GM12878 (cell line): ENCODE measurements at regions of chr18 and their contacts with region 1.

Region 1: DNA sequence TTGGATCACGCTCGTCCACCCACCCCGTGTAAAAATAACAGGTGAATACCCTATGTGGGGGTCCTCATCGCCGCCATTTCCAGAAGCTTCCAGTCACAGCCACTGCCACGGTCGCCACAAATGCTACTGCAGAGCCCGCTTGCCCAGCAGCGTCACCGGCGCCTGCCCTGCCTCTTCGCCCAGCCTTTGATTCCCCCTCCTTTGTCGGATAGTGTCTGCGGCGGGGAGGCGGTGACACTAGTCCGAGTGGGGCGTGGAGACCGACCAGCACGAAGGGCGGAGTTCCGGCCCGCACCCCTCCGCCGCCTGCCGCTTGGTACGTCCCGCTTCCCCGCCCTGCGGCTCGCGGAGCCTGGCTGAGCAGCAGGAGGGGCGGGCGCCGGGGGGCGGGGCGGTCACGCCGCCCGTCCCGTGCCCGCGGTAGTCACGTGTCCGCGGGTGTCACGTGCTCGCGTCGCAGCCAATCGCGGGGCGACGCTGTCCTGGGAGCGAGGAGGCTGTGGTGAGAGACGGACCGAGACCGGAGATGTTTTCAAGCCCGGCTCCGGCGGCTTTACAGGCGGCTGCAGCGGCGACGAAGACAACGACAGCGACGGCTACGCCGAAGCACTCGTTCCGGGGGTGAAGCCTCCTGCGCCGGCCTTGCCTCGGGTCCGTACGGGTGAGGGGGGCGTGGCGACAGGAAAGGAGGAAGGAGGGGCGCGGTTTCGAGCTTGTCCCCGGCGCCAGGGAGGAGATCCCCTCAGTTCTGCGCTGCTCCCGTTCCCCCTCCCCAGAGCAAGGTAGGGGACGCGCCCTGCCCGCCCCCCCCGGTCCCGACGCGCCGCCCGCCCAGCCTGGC is at the start of gene ANKRD12:
- DNase-seq: peak; percentile 89
- ATAC-seq: peak; percentile 86
- H3K4me3 ChIP-seq: peak within 1 kb of the TSS; percentile 92
- H3K27ac ChIP-seq: peak within 1 kb of the TSS; percentile 80
- H3K4me1 ChIP-seq: no peaks in the 10 kb centered on the region; the same call in 1 of the 2 replicates
- H3K27me3 ChIP-seq: no peaks in the 10 kb centered on the region
- CTCF ChIP-seq: no peak
- EP300 ChIP-seq: 0 out of 4 replicates have a peak, but pooled peaks of 1 of the 2 experiments have one; percentile 16
- POLR2A ChIP-seq: peak; percentile 90
- RAD21 ChIP-seq: no peak
- polyA plus RNA-seq, gene ANKRD12: 20.0 to 20.3 TPM

Region 2: GRCh38 chr18:9102508-9103375 is 33.8 kb before region 1 on chr18 and contains the start of gene NDUFV2:
- CTCF ChIA-PET with region 1: interaction called, 95 read pairs
- POLR2A ChIA-PET with region 1: interaction called, 85 read pairs
- RAD21 ChIA-PET with region 1: interaction called, 73 read pairs
- SMC1A ChIA-PET with region 1: interaction called, 137 read pairs
- in situ Hi-C with region 1: no loop called
- intact Hi-C with region 1: loop called (anchors 2 kb)
- DNase-seq: peak; percentile 77
- ATAC-seq: peak; percentile 93
- H3K4me3 ChIP-seq: peak within 1 kb of the TSS; percentile 87
- H3K27ac ChIP-seq: peak within 1 kb of the TSS; percentile 85
- H3K4me1 ChIP-seq: peaks cover 5% of the 10 kb centered on the region
- H3K27me3 ChIP-seq: no peaks in the 10 kb centered on the region
- CTCF ChIP-seq: no peak
- EP300 ChIP-seq: no peak
- POLR2A ChIP-seq: peak; percentile 87
- RAD21 ChIP-seq: no peak
- polyA plus RNA-seq, gene NDUFV2: 409 to 471 TPM

Region 3: GRCh38 chr18:9117980-9118841 is 18.3 kb before region 1 on chr18:
- CTCF ChIA-PET with region 1: interaction called, 13 read pairs
- POLR2A ChIA-PET with region 1: interaction called, 13 read pairs
- RAD21 ChIA-PET with region 1: interaction called, 40 read pairs
- SMC1A ChIA-PET with region 1: interaction called, 137 read pairs
- in situ Hi-C with region 1: no loop called
- intact Hi-C with region 1: loop called (anchors 1 kb)
- DNase-seq: no peak
- ATAC-seq: peak; percentile 48
- H3K4me3 ChIP-seq: peak overlapping the region; percentile 25
- H3K27ac ChIP-seq: peak overlapping the region; percentile 89
- H3K4me1 ChIP-seq: peaks cover 38% of the 10 kb centered on the region
- H3K27me3 ChIP-seq: no peaks in the 10 kb centered on the region
- CTCF ChIP-seq: no peak
- EP300 ChIP-seq: peak in 1 of 2 experiments; percentile 54; a peak in 1 of 4 replicates
- POLR2A ChIP-seq: no peak
- RAD21 ChIP-seq: no peak

Region 4: GRCh38 chr18:9353596-9353995 is 217.1 kb after region 1 on chr18:
- CTCF ChIA-PET with region 1: interaction called, 4 read pairs
- POLR2A ChIA-PET with region 1: no interaction called
- RAD21 ChIA-PET with region 1: no interaction called
- SMC1A ChIA-PET with region 1: interaction called, 3 read pairs
- in situ Hi-C with region 1: no loop called
- intact Hi-C with region 1: loop called (anchors 5 kb)
- DNase-seq: peak; percentile 88
- ATAC-seq: peak; percentile 92
- H3K4me3 ChIP-seq: no peak overlapping the region
- H3K27ac ChIP-seq: peak overlapping the region; percentile 75
- H3K4me1 ChIP-seq: peaks cover 26% of the 10 kb centered on the region
- H3K27me3 ChIP-seq: no peaks in the 10 kb centered on the region
- CTCF ChIP-seq: no peak
- EP300 ChIP-seq: peak in 1 of 2 experiments; percentile 43; a peak in 1 of 4 replicates
- POLR2A ChIP-seq: no peak
- RAD21 ChIP-seq: no peak